PC-9 (cell line): ENCODE measurements at regions of chr4 and their contacts with region 1.

Region 1: DNA sequence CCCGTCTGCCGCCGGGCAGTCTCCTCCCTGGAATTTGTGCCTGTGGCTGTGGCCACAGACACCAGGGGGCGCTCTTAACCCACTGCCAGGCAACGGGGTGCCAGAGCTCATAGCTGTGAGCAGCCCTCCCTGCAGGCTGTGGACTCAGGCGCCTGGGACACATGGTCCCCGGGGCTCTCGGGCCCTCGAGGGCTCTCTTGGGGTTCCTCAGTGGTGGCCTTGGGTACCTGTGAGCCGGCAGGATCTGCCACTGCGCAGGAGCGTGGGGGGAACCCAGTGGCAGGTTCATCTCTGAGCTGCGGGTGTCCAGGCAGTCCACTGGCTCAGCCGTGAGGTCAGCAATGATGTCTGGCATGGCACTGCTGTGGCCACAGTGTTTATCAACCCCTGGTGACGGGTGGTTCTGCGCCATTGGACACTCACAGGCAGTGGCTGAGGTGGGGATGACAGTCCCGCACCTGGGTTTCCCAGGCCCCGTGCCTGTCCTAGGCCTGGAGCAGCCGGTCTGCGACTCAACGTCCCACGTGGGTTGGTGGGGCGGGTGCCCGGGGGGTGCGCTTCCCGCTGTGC is 37.2 kb downstream of the PCGF3 start:
- DNase-seq: peak in 1 of 2 experiments; percentile 66
- H3K4me3 ChIP-seq: no peak overlapping the region
- H3K27ac ChIP-seq: no peak overlapping the region
- H3K4me1 ChIP-seq: no peaks in the 10 kb centered on the region
- H3K27me3 ChIP-seq: no peaks in the 10 kb centered on the region
- CTCF ChIP-seq: peak; percentile 96

Region 2: DNA sequence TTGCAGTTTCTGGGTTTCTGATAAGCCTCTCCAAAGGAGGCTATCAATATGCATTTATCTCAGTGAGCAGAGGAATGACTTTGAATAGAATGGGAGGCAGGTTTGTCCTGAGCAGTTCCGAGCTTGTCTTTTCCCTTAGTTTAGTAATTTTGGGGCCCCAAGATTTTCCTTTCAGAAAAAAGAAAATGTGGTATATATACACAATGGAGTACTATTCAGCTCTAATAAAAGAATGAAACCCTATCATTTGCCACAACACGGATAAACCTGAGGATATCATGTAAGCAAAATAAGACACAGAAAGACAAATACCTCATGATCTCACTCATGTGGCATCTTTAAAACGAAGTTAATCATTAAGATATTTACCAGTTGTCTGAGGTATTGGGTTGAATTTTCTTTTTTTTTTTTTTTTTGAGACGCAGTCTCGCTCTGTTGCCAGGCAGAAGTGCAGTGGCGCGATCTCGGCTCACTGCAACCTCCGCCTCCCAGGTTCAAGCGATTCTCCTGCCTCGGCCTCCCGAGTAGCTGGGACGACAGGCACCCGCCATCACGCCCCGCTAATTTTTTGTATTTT is 244.4 kb before region 1 on chr4:
- CTCF ChIA-PET with region 1: no interaction called
- POLR2A ChIA-PET with region 1: no interaction called
- intact Hi-C with region 1: no loop called
- DNase-seq: no peak
- H3K4me3 ChIP-seq: peak overlapping the region; percentile 97
- H3K27ac ChIP-seq: peak overlapping the region; percentile 60
- H3K4me1 ChIP-seq: peaks cover 11% of the 10 kb centered on the region
- H3K27me3 ChIP-seq: no peaks in the 10 kb centered on the region
- CTCF ChIP-seq: no peak

Region 3: GRCh38 chr4:602559-602942 is 140.3 kb before region 1 on chr4:
- CTCF ChIA-PET with region 1: no interaction called
- POLR2A ChIA-PET with region 1: no interaction called
- intact Hi-C with region 1: loop called (anchors 10 kb)
- DNase-seq: peak; percentile 74 to 87
- H3K4me3 ChIP-seq: no peak overlapping the region
- H3K27ac ChIP-seq: no peak overlapping the region
- H3K4me1 ChIP-seq: no peaks in the 10 kb centered on the region
- H3K27me3 ChIP-seq: peaks cover 89% of the 10 kb centered on the region
- CTCF ChIP-seq: peak; percentile 92

Region 4: DNA sequence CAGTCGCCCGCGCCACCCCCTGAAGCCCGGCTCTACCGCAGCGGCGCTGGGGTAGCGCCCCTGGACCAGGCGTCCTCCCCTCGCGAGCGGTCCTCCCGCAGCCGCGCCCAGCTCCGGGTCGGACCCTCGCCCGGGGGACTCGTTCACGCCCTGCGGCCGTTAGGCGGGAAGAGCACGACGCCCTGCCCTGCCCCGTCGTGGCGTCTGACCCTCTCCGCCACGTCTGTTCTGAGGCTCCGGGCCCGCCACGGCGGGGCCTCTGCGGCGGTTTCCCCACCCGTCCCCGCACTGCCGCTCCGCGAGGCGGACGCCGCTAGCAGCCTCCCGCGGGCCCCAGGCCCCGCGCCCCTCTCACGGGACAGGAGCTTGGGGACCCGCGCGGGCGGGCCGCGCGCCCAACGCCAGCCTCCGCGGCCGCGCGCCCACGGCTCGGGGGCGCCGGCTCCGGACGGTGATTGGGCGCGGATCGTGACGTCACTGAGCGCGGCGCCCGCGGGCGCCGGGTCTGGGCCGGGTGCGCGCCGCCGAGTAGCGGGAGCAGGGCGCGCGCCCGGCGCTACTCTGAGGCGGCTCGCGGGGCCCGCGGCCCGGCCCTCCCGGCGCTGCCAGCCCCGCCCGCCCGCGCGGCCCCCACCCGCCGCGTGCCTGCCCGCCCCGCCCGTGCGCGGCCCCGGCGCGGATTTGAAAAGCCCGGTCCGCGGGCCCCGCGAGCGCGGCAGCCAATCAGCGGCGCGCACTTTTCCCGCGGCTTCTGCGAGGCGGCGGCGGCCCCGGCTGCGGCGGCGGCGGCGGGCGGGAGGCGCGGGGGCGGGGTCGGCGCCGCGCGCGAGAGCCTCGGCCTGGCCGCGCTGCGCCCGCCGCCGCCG is 1128.0 kb after region 1 on chr4 and contains the start of gene NSD2:
- CTCF ChIA-PET with region 1: no interaction called
- POLR2A ChIA-PET with region 1: no interaction called
- intact Hi-C with region 1: no loop called
- DNase-seq: peak; percentile 51 to 93
- H3K4me3 ChIP-seq: peak within 1 kb of the TSS; percentile 74
- H3K27ac ChIP-seq: peak within 1 kb of the TSS; percentile 79
- H3K4me1 ChIP-seq: peaks cover 33% of the 10 kb centered on the region
- H3K27me3 ChIP-seq: no peaks in the 10 kb centered on the region
- CTCF ChIP-seq: no peak
- total RNA-seq, gene NSD2: 176 and 186 TPM in 2 replicates